Right ventricle myocardium inferior (tissue), 1 donor: ENCODE measurements at regions of chrX and their contacts with region 1.

Region 1: GRCh38 chrX:151151665-151152267 is 24.6 kb upstream of the GPR50 start:
- DNase-seq: no peak
- ATAC-seq: no peak

Region 2: DNA sequence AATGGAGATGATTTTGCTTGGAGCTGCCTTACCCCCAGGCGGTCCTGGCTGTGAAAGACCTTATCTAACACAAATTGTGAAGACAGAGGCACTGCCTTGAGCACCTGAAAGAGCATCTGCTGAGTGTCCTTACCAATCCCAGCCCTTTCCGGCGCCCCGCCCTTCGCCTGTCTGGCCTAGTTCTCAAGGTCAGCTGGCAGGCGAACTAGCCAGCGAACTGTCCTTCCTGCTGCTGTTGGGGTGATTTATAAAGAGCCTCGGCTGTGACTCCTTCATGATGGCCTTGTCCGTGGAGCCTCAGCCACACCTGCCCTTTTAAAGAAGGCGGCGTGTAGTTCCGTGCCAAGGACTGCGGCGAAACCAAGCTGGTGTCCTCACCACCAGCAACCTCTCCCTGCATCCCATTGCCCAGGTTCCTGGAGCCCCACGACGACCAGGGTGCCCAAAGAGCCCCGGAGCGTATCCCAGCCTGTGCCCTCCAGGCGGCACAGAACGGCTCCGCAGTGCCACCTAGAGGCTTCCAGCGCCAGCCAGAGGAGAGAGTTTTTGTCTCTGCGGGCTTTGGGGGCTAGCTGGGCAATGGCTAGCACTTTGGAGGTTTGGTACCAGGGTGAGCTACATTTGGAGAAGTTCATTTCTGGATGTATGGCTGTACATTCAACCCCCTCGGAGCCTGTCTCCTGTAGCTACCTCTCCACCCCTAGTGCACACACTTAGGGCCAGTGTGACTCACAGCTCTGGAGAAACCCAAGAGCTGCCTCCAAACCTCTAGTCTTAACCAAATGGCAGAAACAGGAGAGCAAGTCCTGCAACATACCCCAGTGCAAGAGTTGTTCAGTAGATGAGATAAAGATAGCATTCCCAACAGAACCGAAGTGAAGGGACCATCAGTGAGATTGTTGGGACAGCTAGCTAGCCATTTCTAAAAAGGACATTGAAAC is 208.4 kb after region 1 on chrX:
- intact Hi-C with region 1: loop called (anchors 5 kb)
- DNase-seq: peak; percentile 48
- ATAC-seq: peak; percentile 57

Region 3: DNA sequence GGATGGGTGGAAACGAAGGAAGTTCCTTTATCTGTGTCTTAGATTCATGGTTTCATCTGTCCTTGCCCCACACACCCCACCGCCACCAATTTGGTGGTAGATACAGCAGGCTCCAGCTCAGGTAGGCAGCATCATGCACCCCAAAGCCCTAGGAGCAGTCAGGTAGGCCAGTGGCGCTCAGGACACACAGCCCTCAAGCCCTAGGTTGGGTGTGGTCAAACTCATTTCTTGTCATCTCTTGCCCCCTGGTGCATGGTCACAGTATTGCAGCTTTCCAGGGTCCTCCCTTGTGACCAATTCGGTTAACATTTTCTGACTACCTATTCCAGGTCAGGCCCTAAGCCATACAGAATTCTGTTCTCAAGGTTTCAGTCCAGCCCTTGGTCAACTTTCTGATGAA is 529.0 kb after region 1 on chrX:
- intact Hi-C with region 1: loop called (anchors 2 kb)
- DNase-seq: no peak
- ATAC-seq: no peak